ENCODE measurements at regions of chr1 and their contacts with region 1.

Region 1: GRCh38 chr1:59498640-59499039 is 201.7 kb downstream of the FGGY start:
- DNase-seq: no peak
- ATAC-seq: peak; percentile 50 to 77
- H3K4me3 ChIP-seq: no peak overlapping the region
- H3K27ac ChIP-seq: no peak overlapping the region
- H3K4me1 ChIP-seq: no peaks in the 10 kb centered on the region
- H3K27me3 ChIP-seq: no peaks in the 10 kb centered on the region

Region 2: GRCh38 chr1:59408608-59409240 is 89.9 kb before region 1 on chr1:
- intact Hi-C with region 1: loop called in 1 of 4 experiments (anchors 10 kb)
- DNase-seq: no peak
- ATAC-seq: no peak
- H3K4me3 ChIP-seq: no peak overlapping the region
- H3K27ac ChIP-seq: no peak overlapping the region
- H3K4me1 ChIP-seq: no peaks in the 10 kb centered on the region
- H3K27me3 ChIP-seq: no peaks in the 10 kb centered on the region

Region 3: DNA sequence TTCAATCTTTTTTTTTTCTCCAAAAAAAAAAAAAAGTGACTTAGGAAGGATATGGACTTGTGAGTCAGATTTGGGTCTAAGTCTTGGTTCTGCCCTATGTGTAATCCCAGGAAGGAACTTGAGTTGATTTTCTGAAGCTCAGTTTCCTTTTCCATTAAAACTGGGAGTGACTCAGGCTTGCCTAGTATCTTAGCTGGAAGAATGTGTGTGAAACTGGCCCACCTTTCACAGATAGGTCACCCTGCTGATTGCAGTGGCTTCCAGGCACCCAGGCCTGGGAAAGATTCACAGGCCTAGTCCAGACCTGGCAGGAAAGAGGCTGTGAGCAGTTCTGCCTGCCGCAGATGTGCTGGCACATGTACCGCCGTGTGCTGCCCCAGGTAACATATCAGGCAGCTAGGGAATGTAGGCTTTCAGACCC is 97.8 kb after region 1 on chr1:
- intact Hi-C with region 1: no loop called
- DNase-seq: peak; percentile 28 to 56 (median 52)
- ATAC-seq: peak; percentile 51 to 96
- H3K4me3 ChIP-seq: no peak overlapping the region
- H3K27ac ChIP-seq: no peak overlapping the region
- H3K4me1 ChIP-seq: peaks cover 4% of the 10 kb centered on the region
- H3K27me3 ChIP-seq: no peaks in the 10 kb centered on the region